Endothelial cell of umbilical vein (primary cell): ENCODE measurements at regions of chr1 and their contacts with region 1.

Region 1: GRCh38 chr1:173986951-173987350 is 35.2 kb downstream of the RC3H1 start:
- DNase-seq: no peak
- H3K4me3 ChIP-seq: no peak overlapping the region
- H3K27ac ChIP-seq: no peak overlapping the region
- H3K4me1 ChIP-seq: no peaks in the 10 kb centered on the region
- H3K27me3 ChIP-seq: no peaks in the 10 kb centered on the region
- CTCF ChIP-seq: no peak
- POLR2A ChIP-seq: no peak

Region 2: DNA sequence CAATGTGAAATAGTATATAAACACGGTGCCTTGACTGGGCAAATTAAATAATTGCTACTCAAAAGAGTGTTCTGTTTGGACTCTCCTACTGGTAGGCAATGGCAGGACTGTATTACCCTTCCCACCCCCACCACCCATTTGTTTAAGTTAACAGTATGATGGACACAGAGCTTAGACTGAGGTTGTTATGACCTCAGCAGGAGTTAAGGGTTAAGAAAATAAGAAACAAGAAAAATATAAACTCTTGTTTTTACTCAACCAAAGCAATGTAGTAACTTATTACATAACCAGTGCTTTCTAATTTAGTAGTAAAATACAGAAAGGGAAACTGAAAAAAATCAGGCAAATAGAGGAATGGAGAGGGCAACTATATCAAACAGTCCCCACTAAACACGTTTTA is 49.9 kb before region 1 on chr1:
- CTCF ChIA-PET with region 1: interaction called, 3 read pairs
- POLR2A ChIA-PET with region 1: no interaction called
- dilution Hi-C with region 1: no loop called
- intact Hi-C with region 1: loop called (anchors 5 kb)
- DNase-seq: no peak
- H3K4me3 ChIP-seq: no peak overlapping the region
- H3K27ac ChIP-seq: no peak overlapping the region
- H3K4me1 ChIP-seq: no peaks in the 10 kb centered on the region
- H3K27me3 ChIP-seq: no peaks in the 10 kb centered on the region
- CTCF ChIP-seq: no peak
- POLR2A ChIP-seq: no peak